Caco-2 (cell line): ENCODE measurements at regions of chr15 and their contacts with region 1.

Region 1: GRCh38 chr15:64263567-64263966 is 92.4 kb downstream of the CSNK1G1 start:
- DNase-seq: no peak
- H3K4me3 ChIP-seq: no peak overlapping the region
- H3K4me3 Mint-ChIP-seq: no peak overlapping the region
- H3K27ac Mint-ChIP-seq: no peak overlapping the region
- H3K4me1 ChIP-seq: no peaks in the 10 kb centered on the region
- H3K4me1 Mint-ChIP-seq: no peaks in the 10 kb centered on the region
- H3K27me3 ChIP-seq: no peaks in the 10 kb centered on the region
- H3K27me3 Mint-ChIP-seq: no peaks in the 10 kb centered on the region
- CTCF ChIP-seq: no peak

Region 2: GRCh38 chr15:62766599-62766998 is 1497.0 kb before region 1 on chr15:
- CTCF ChIA-PET with region 1: no interaction called
- POLR2A ChIA-PET with region 1: interaction called, 17 read pairs
- intact Hi-C with region 1: no loop called
- DNase-seq: no peak
- H3K4me3 ChIP-seq: no peak overlapping the region
- H3K4me3 Mint-ChIP-seq: no peak overlapping the region
- H3K27ac Mint-ChIP-seq: no peak overlapping the region
- H3K4me1 ChIP-seq: no peaks in the 10 kb centered on the region
- H3K4me1 Mint-ChIP-seq: no peaks in the 10 kb centered on the region
- H3K27me3 ChIP-seq: no peaks in the 10 kb centered on the region
- H3K27me3 Mint-ChIP-seq: no peaks in the 10 kb centered on the region
- CTCF ChIP-seq: no peak

Region 3: GRCh38 chr15:64127521-64128270 is 135.9 kb before region 1 on chr15:
- CTCF ChIA-PET with region 1: no interaction called
- POLR2A ChIA-PET with region 1: interaction called, 27 read pairs
- intact Hi-C with region 1: no loop called
- DNase-seq: no peak
- H3K4me3 ChIP-seq: no peak overlapping the region
- H3K4me3 Mint-ChIP-seq: no peak overlapping the region
- H3K27ac Mint-ChIP-seq: no peak overlapping the region
- H3K4me1 ChIP-seq: no peaks in the 10 kb centered on the region
- H3K4me1 Mint-ChIP-seq: no peaks in the 10 kb centered on the region
- H3K27me3 ChIP-seq: no peaks in the 10 kb centered on the region
- H3K27me3 Mint-ChIP-seq: no peaks in the 10 kb centered on the region
- CTCF ChIP-seq: no peak